ENCODE measurements at regions of chr9 and their contacts with region 1.

Region 1: GRCh38 chr9:38263532-38263931 is 129.0 kb upstream of the ALDH1B1 start:
- DNase-seq: no peak
- ATAC-seq: no peak
- H3K4me3 ChIP-seq: no peak overlapping the region
- H3K27ac ChIP-seq: no peak overlapping the region
- H3K4me1 ChIP-seq: no peaks in the 10 kb centered on the region
- H3K27me3 ChIP-seq: peaks cover 0 to 4% (median 0%) of the 10 kb centered on the region in 9 donors
- CTCF ChIP-seq: peak in 4 of 12 donors; percentile 10 to 29 (median 21)
- POLR2A ChIP-seq: no peak

Region 2: DNA sequence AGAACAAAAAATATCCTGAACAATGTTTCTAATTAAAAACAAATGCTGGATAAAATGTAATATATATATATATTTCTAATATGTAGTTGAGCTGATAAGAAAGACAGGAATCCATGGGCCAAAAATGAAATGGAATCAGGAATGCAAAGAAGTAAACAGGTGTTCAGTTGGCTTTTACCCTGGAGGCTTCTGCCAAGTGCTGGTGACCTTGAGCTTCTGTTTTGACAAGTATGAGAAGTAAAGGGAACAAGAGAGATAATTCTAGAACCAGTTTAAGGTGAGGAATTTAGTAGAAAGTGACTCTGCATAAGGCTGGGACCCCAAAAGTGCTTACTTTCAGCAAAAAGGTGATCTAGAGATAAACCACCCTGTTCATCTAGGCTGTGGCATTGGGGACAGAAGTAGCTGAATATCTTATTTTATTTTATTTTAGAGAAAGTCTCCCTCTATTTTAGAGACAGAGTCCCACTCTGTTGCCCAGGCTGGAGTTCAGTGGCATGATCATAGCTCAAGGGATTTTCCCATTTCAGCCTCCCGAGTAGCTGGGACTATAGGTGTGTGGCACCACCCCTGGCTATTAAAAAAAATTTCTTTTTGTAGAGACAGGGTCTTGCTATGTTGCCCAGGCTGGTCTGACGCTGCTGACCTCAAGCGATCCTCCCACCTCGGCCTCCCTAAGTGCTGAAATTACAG is 435.9 kb before region 1 on chr9:
- intact Hi-C with region 1: no loop called
- DNase-seq: no peak
- ATAC-seq: no peak
- H3K4me3 ChIP-seq: no peak overlapping the region
- H3K27ac ChIP-seq: no peak overlapping the region
- H3K4me1 ChIP-seq: no peaks in the 10 kb centered on the region
- H3K27me3 ChIP-seq: no peaks in the 10 kb centered on the region
- CTCF ChIP-seq: no peak
- POLR2A ChIP-seq: no peak

Region 3: DNA sequence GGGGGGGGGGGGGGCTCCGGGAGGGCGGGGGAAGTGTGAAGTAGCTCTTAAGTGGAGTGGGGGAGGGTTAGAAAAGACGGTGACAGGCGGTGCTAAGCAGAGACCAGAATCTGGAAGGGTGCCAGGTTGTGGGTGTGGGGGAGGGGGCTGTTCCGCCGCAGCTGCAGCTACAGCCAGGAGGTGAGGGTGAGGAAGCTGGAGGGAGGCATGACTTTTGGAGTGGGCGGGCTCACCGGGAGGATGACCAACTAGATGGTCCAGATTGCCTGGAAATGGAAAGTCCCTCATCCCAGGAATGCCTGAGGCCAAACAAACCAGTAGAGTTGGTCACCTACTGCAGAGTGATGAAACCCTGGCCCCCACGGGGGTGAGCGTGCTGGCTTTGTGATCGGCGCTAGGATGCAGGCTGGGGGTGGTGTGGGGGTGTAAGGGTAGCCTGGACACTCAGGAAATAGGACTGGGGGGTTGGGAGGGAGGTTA is 36.4 kb before region 1 on chr9:
- intact Hi-C with region 1: loop called in 1 of 10 experiments (anchors 5 kb)
- DNase-seq: peak; percentile 25 to 66 (median 36)
- ATAC-seq: peak in 3 of 4 donors; percentile 22 to 58 (median 41)
- H3K4me3 ChIP-seq: no peak overlapping the region
- H3K27ac ChIP-seq: no peak overlapping the region
- H3K4me1 ChIP-seq: peaks cover 0 to 11% (median 0%) of the 10 kb centered on the region in 12 donors
- H3K27me3 ChIP-seq: peaks cover 0 to 26% (median 0%) of the 10 kb centered on the region in 9 donors
- CTCF ChIP-seq: no peak
- POLR2A ChIP-seq: no peak